ENCODE measurements at regions of chr20 and their contacts with region 1.

Region 1: DNA sequence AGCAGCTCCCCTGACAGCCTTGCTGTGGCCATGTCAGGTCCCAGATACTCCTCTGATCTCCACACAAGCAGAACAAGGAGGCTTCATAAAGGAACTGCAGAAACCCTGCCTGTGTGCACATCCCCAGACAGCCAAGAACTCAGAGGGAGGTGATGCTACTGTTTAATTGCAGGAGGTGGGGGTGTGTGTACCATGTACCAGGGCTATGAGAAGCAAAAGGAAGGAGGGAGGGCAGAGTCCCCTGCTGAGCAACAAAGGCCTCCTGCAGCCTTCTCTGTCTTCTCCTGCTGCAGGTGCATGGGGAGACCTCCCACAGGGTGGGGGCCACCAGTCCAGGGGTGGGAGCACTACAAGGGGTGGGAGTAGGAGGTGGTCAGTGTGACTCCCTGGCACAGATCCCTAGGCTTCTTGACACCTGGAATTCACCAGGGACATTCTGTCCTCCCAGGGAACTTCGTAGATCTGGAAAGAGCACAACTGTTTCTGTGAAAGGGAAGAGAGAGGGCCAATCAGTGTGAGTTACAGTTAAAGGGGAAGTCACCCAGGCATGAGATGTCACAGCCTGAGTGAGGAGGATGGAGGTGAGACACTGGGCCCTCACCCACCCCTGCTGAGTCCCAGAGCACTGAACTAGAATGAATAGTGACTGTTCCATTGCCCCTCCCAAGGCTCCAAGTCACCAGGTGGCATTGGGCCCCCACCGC is 2.8 kb downstream of the CST2 start:
- DNase-seq: no peak
- ATAC-seq: no peak
- H3K4me3 ChIP-seq: no peak overlapping the region
- H3K27ac ChIP-seq: no peak overlapping the region
- H3K4me1 ChIP-seq: no peaks in the 10 kb centered on the region
- H3K27me3 ChIP-seq: no peaks in the 10 kb centered on the region
- CTCF ChIP-seq: no peak

Region 2: DNA sequence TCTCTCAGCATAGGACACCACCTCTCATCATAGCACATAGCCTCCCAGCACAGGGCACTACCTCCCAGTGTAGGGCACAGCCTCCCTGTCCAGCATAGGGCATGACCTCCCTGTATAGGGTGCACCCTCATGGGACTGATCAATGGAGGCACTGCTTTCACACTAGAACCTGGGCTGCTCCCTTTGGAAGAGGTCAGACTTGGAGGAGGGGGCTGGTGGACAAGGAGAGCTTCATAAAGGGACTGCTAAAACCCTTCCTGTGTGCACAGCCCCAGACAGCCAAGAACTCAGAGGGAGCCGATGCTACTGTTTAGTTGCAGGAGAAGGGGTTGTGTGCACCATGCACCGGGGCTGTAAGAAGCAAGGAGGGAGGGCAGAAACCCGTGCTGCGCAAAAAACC is 113.0 kb before region 1 on chr20:
- intact Hi-C with region 1: no loop called
- DNase-seq: no peak
- ATAC-seq: no peak
- H3K4me3 ChIP-seq: no peak overlapping the region
- H3K27ac ChIP-seq: no peak overlapping the region
- H3K4me1 ChIP-seq: no peaks in the 10 kb centered on the region
- H3K27me3 ChIP-seq: no peaks in the 10 kb centered on the region
- CTCF ChIP-seq: no peak

Region 3: DNA sequence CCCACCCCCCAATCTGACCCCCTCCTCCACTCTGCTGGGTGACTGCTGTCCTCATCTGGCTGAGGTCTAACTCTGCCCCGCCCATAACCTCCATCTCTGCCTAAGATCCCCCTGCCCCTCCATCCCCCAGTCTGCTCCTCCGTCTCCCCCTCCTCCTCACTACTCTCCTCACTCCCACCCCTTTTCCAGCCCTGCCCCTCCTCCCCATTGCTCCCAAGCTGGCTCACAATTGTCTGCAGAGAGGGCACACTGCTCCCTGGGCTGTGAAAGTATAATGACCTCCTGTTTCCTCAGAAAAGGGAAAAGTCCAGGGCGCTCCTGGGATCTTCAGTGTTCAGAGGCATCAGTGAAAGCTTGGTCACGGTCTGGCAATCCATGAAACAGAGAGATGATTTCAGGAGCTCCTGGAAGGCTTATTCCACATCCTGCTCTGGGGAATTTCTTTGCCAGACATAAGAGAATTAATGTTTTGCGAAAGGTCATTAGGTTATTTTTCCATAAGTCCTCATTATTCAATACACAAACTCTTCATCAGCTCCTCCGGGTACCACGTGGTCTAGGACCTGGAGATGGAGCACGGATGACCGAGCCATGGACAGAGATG is 34.3 kb after region 1 on chr20:
- intact Hi-C with region 1: loop called in 1 of 2 experiments (anchors 5 kb)
- DNase-seq: no peak
- ATAC-seq: no peak
- H3K4me3 ChIP-seq: no peak overlapping the region
- H3K27ac ChIP-seq: no peak overlapping the region
- H3K4me1 ChIP-seq: no peaks in the 10 kb centered on the region
- H3K27me3 ChIP-seq: no peaks in the 10 kb centered on the region
- CTCF ChIP-seq: no peak

Region 4: DNA sequence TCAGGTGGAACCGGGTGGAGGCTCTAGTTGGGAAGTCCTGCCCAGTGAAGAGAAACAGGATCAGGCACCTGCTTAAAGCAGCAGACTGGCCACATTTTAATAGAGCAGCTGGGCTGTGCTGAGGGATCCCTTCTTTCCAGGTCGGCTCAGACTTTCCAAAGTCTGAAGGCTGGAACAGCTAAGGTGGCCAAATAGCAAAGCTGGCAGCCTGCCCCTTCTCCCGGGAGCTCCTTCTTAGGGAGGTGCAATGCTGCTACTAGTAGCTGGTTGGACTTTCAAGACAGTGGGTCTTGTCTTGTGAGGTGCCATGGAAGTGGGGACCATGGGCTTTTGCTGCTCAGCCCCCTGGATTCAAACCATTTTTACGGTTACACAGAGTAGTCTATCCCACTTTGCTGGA is 86.4 kb after region 1 on chr20:
- intact Hi-C with region 1: no loop called
- DNase-seq: peak in 1 of 4 donors; percentile 5
- ATAC-seq: no peak
- H3K4me3 ChIP-seq: no peak overlapping the region
- H3K27ac ChIP-seq: no peak overlapping the region
- H3K4me1 ChIP-seq: no peaks in the 10 kb centered on the region
- H3K27me3 ChIP-seq: no peaks in the 10 kb centered on the region
- CTCF ChIP-seq: no peak

Measured in left lung (tissue), 14 donors.